H1 (cell line): ENCODE measurements at regions of chr19 and their contacts with region 1.

Region 1: GRCh38 chr19:38402967-38403861 is at the start of gene FAM98C:
- DNase-seq: peak; percentile 94 to 99
- H3K4me3 ChIP-seq: peak within 1 kb of the TSS; percentile 34 to 67 (median 49)
- H3K27ac ChIP-seq: no peak within 1 kb of the TSS
- H3K4me1 ChIP-seq: no peaks in the 10 kb centered on the region; a peak in 2 of 7 replicates
- H3K27me3 ChIP-seq: peaks cover 2 to 38% (median 33%) of the 10 kb centered on the region in 4 experiments
- CTCF ChIP-seq: peak; percentile 88 to 95 (median 91)
- EP300 ChIP-seq: no peak
- POLR2A ChIP-seq: 0 out of 3 replicates have a peak, but pooled peaks of 1 of the 2 experiments have one; percentile 40
- RAD21 ChIP-seq: peak; percentile 94 to 95
- total RNA-seq, gene FAM98C: 4.6 and 6.1 TPM in 2 replicates

Region 2: GRCh38 chr19:38250821-38251563 is 152.2 kb before region 1 on chr19:
- CTCF ChIA-PET with region 1: no interaction called
- POLR2A ChIA-PET with region 1: no interaction called
- DNase-seq: peak in 1 of 2 experiments; percentile 70
- H3K4me3 ChIP-seq: peak overlapping the region in 3 of 4 experiments; percentile 4 to 50 (median 14); a peak in 5 of 8 replicates
- H3K27ac ChIP-seq: no peak overlapping the region
- H3K4me1 ChIP-seq: peaks cover 10 to 39% (median 24%) of the 10 kb centered on the region in 4 experiments
- H3K27me3 ChIP-seq: peaks cover 0 to 9% (median 8%) of the 10 kb centered on the region in 4 experiments; a peak in 4 of 7 replicates
- CTCF ChIP-seq: no peak
- EP300 ChIP-seq: no peak
- POLR2A ChIP-seq: no peak
- RAD21 ChIP-seq: no peak

Region 3: GRCh38 chr19:38370299-38370698 is 32.9 kb before region 1 on chr19:
- CTCF ChIA-PET with region 1: no interaction called
- POLR2A ChIA-PET with region 1: no interaction called
- DNase-seq: no peak
- H3K4me3 ChIP-seq: no peak overlapping the region
- H3K27ac ChIP-seq: no peak overlapping the region
- H3K4me1 ChIP-seq: peaks cover 0 to 2% (median under 1%) of the 10 kb centered on the region in 4 experiments; a peak in 1 of 7 replicates
- H3K27me3 ChIP-seq: peaks cover 0 to 2% (median 0%) of the 10 kb centered on the region in 4 experiments; a peak in 2 of 7 replicates
- CTCF ChIP-seq: no peak
- EP300 ChIP-seq: no peak
- POLR2A ChIP-seq: no peak
- RAD21 ChIP-seq: no peak

Region 4: DNA sequence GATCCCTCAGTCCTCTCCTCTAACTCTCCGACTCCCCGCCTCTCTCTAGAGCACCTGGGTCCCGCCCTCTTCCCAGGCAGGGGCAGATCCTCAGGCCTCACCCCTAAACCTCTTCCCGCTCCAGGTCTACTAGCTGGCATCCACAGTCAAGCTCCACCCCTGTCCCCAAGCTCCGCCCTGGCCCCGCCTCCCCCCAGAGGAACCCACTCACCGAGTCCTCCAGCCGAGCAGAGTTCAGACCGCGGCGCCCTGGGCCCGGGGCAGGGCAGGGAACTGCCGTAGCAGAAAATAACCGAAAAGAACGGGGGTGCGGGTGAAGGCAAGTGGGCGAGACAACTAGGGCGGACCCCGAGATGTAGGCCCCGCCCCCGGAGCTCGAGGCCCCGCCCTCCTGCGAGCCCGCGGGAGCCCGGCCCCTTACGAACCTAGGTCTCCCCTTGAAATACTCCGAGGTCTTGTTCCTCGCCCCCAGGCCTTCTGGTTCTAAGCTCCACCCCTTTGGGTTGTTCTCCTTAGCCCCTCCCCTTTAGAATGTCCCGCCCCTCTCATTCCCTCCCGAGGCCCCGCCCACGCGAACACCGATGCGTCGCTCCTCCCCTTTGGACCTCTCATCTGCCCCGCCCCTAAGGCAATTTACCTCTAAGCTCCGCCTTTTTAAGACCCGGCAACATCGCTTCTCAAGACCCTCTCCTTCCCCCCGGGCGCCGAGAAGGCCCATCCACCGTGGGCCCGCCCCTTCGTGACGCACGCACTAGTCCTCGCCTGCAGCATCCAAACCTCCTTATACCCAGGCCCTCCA is 15.5 kb before region 1 on chr19 and contains the start of gene GGN:
- CTCF ChIA-PET with region 1: interaction called, 4 read pairs
- POLR2A ChIA-PET with region 1: interaction called, 38 read pairs
- DNase-seq: peak; percentile 95 to 98
- H3K4me3 ChIP-seq: peak within 1 kb of the TSS; percentile 93 to 98 (median 96)
- H3K27ac ChIP-seq: peak within 1 kb of the TSS; percentile 74
- H3K4me1 ChIP-seq: peaks cover 10 to 23% (median 14%) of the 10 kb centered on the region in 4 experiments
- H3K27me3 ChIP-seq: no peaks in the 10 kb centered on the region
- CTCF ChIP-seq: no peak
- EP300 ChIP-seq: no peak
- POLR2A ChIP-seq: no peak
- RAD21 ChIP-seq: no peak
- total RNA-seq, gene GGN: 1.2 and 2.7 TPM in 2 replicates

Region 5: DNA sequence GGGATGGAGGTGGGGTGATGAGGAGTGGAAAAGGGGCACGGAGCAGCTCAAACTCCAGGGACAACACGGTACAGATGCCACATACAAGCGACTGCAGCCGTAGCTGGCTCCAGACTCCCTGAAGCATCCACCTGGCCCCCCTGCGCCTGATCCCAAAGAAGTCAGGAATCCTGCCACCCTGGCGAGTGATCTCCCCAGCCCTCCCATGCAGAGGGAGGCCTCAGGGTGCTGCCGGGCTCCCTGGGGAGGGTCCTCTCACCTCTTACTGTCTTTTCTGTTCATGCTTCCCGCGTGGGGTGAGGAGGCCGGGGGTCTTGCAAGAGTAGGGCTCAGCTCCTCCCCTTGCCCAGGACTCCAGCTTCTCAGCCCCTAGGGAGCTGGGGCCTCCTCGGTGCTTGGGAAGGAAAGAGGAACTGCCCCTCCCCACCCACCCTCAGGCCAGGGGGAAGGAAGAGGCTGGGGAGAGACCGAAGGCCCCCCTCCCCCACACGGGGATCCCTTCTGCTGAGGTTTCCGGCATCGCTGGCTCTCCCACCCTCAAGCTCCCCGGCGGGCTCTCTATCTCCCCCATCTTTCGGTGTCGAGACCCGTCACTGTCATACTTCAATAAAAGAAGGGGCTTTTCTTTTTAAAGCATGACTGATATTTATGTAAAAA is 22.7 kb after region 1 on chr19 and contains the start of gene RASGRP4:
- CTCF ChIA-PET with region 1: interaction called, 10 read pairs
- POLR2A ChIA-PET with region 1: interaction called, 5 read pairs
- DNase-seq: peak in 1 of 2 experiments; percentile 56
- H3K4me3 ChIP-seq: peak within 1 kb of the TSS in 2 of 4 experiments; percentile 11 to 34; a peak in 3 of 8 replicates
- H3K27ac ChIP-seq: no peak within 1 kb of the TSS
- H3K4me1 ChIP-seq: peaks cover 4 to 8% (median 8%) of the 10 kb centered on the region in 4 experiments; a peak in 6 of 7 replicates
- H3K27me3 ChIP-seq: no peaks in the 10 kb centered on the region
- CTCF ChIP-seq: 0 out of 4 replicates have a peak, but pooled peaks of 1 of the 3 experiments have one; percentile 2
- EP300 ChIP-seq: no peak
- POLR2A ChIP-seq: no peak
- RAD21 ChIP-seq: no peak
- total RNA-seq, gene RASGRP4: 1.9 and 2.0 TPM in 2 replicates

Region 6: GRCh38 chr19:38441657-38442348 is 38.6 kb after region 1 on chr19:
- CTCF ChIA-PET with region 1: interaction called, 35 read pairs
- POLR2A ChIA-PET with region 1: interaction called, 9 read pairs
- DNase-seq: peak in 1 of 2 experiments; percentile 63
- H3K4me3 ChIP-seq: no peak overlapping the region
- H3K27ac ChIP-seq: no peak overlapping the region
- H3K4me1 ChIP-seq: peaks cover 0 to 5% (median 3%) of the 10 kb centered on the region in 4 experiments; a peak in 5 of 7 replicates
- H3K27me3 ChIP-seq: no peaks in the 10 kb centered on the region
- CTCF ChIP-seq: peak; percentile 67 to 79 (median 73)
- EP300 ChIP-seq: no peak
- POLR2A ChIP-seq: no peak
- RAD21 ChIP-seq: peak; percentile 63 to 73

Region 7: DNA sequence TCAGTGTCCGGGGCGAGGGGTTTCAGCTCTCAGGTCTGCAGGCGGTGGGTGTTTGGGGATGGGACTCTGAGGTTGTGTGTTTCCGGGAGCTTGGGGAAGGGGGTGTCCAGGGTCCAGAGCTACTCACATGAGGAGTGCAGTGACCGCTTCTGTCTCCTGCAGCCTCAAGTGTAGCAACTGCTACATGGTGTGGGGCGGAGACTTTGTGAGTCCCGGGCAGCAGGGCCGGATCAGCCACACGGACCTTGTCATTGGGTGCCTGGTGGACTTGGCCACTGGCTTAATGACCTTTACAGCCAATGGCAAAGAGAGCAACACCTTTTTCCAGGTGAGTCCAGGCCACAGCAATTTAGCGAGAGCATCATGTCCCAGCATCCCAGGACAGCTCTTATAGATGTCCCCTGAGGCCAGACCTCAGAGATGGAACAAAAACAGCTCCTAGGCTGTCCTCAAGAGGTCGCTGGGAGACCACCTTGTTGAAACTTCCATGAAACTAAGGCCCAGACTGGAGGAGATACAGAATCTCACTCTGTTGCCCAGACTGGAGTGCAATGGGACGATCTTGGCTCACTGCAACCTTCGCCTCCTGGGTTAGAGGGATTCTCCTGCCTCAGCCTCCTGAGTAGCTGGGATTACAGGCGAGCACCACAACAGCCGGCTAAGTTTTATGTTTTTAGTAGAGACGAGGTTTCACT is 75.2 kb after region 1 on chr19:
- CTCF ChIA-PET with region 1: interaction called, 22 read pairs
- POLR2A ChIA-PET with region 1: interaction called, 4 read pairs
- DNase-seq: no peak
- H3K4me3 ChIP-seq: no peak overlapping the region
- H3K27ac ChIP-seq: no peak overlapping the region
- H3K4me1 ChIP-seq: no peaks in the 10 kb centered on the region
- H3K27me3 ChIP-seq: no peaks in the 10 kb centered on the region
- CTCF ChIP-seq: peak; percentile 26 to 45 (median 38)
- EP300 ChIP-seq: no peak
- POLR2A ChIP-seq: no peak
- RAD21 ChIP-seq: peak; percentile 55 to 70

Region 8: DNA sequence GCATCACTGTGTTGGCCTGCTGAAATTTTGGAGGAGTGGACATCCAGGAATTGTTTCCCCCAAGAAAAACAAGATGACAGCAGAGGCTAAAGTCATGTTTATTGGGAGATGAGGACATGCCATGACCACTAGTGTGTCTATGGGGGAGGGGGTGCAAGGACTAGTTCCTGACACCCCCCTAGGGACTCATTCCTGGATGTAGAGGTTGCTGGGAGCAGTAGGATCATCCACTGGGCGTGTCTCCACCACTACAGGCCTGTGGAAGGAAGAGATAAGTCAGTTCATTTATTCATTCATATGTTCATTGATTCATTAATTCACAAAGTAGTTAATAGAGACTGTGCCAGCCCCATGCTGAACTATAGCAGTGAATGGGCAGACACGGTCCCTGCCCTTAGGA is 184.3 kb after region 1 on chr19:
- CTCF ChIA-PET with region 1: no interaction called
- POLR2A ChIA-PET with region 1: no interaction called
- DNase-seq: no peak
- H3K4me3 ChIP-seq: no peak overlapping the region
- H3K27ac ChIP-seq: no peak overlapping the region
- H3K4me1 ChIP-seq: no peaks in the 10 kb centered on the region
- H3K27me3 ChIP-seq: no peaks in the 10 kb centered on the region
- CTCF ChIP-seq: no peak
- EP300 ChIP-seq: no peak
- POLR2A ChIP-seq: no peak
- RAD21 ChIP-seq: no peak